Mammary epithelial cell (primary cell): ENCODE measurements at regions of chr1 and their contacts with region 1.

Region 1: DNA sequence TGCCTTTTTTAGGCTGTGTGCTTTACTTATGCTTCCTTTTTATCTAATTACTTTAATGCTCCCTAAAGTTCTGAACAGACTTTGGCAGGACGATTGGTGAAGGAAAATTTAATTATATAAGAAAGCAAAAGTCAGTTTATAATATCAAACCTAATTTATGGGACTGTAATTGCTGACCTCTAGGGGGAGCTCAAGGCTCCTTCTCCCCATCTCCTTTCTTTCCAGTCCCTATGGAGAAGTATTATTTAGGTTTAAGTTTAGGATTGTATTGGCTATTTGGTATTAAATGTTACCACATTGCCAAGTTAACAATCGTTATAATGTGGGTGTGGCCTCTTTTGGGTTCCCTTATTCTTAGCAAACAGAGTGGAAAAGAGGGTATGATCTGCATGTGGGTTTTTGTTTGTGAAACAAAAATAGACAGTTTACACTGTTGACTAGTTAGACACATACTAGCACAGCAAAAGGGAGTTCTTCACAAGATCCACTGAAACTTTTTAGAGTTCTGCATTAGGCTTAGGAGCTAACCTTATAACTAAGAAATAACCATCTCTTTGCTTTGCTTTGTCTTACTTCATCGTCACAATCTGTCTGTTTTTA is 48.2 kb upstream of the TNFSF4 start:
- DNase-seq: peak; percentile 21
- H3K4me3 ChIP-seq: no peak overlapping the region
- H3K27ac ChIP-seq: no peak overlapping the region
- H3K4me1 ChIP-seq: peaks cover 4% of the 10 kb centered on the region
- H3K27me3 ChIP-seq: no peaks in the 10 kb centered on the region
- CTCF ChIP-seq: peak; percentile 82 to 85

Region 2: DNA sequence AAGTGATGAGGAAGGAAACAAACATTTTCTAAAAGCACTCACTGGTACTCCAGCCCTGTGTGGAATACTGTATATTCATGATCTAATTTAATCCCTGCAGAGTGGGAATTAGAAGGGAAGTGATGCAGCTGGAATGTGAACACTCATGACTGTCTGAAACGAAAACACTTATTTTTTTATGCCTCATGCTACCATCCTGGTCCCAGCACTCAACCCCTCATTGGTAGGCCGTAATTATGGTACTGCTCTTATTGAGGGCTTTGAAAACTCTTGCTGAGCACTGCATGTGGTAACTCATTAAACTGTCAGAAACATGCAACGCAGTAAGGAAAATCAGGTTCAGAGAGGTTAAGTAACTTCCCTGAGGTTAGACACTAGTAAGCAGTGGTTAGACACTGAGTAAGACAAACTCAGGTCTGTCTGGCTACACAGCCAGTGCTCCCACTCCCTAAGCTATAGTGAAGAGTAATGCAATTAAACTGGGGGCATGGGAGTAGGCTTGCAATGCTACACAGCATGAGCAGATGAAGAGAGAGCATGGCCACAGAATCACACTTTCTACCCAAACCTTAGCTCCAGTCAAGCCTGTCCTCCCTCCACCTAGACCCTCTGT is 30.9 kb before region 1 on chr1:
- CTCF ChIA-PET with region 1: no interaction called
- dilution Hi-C with region 1: no loop called
- in situ Hi-C with region 1: no loop called
- intact Hi-C with region 1: no loop called
- DNase-seq: no peak
- H3K4me3 ChIP-seq: no peak overlapping the region
- H3K27ac ChIP-seq: no peak overlapping the region
- H3K4me1 ChIP-seq: peaks cover 9% of the 10 kb centered on the region
- H3K27me3 ChIP-seq: no peaks in the 10 kb centered on the region
- CTCF ChIP-seq: no peak

Region 3: GRCh38 chr1:173269490-173270230 is 14.3 kb after region 1 on chr1:
- CTCF ChIA-PET with region 1: no interaction called
- dilution Hi-C with region 1: no loop called
- in situ Hi-C with region 1: no loop called
- intact Hi-C with region 1: no loop called
- DNase-seq: peak; percentile 87
- H3K4me3 ChIP-seq: no peak overlapping the region
- H3K27ac ChIP-seq: peak overlapping the region; percentile 77
- H3K4me1 ChIP-seq: peaks cover 42% of the 10 kb centered on the region
- H3K27me3 ChIP-seq: no peaks in the 10 kb centered on the region
- CTCF ChIP-seq: no peak

Region 4: DNA sequence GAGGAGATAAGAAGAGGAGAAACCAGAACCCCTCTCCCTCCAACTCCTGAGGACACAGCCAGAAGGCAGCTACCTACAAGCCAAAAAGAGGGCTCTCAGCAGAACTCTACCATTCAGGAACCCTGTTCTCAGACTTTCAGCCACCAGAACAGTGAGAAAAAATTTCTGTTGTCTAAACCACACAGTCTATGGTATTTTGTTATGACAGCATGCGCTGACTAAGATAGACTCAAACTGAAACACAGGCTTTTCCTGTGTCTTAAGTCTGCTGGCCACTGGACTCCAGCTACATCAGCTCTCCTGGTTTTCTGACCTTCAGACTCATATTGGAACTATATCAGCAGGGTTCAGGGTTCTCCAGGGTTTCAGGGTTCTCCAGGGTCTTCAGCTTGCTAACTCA is 78.3 kb after region 1 on chr1:
- CTCF ChIA-PET with region 1: no interaction called
- dilution Hi-C with region 1: no loop called
- in situ Hi-C with region 1: no loop called
- intact Hi-C with region 1: no loop called
- DNase-seq: no peak
- H3K4me3 ChIP-seq: no peak overlapping the region
- H3K27ac ChIP-seq: no peak overlapping the region
- H3K4me1 ChIP-seq: peaks cover 8% of the 10 kb centered on the region
- H3K27me3 ChIP-seq: no peaks in the 10 kb centered on the region
- CTCF ChIP-seq: no peak

Region 5: GRCh38 chr1:173409613-173410012 is 154.3 kb after region 1 on chr1:
- CTCF ChIA-PET with region 1: interaction called, 3 read pairs
- dilution Hi-C with region 1: no loop called
- in situ Hi-C with region 1: loop called (anchors 5 to 25 kb)
- intact Hi-C with region 1: loop called (anchors 1 kb)
- DNase-seq: peak; percentile 37
- H3K4me3 ChIP-seq: no peak overlapping the region
- H3K27ac ChIP-seq: no peak overlapping the region
- H3K4me1 ChIP-seq: peaks cover 20% of the 10 kb centered on the region
- H3K27me3 ChIP-seq: no peaks in the 10 kb centered on the region
- CTCF ChIP-seq: no peak

Region 6: DNA sequence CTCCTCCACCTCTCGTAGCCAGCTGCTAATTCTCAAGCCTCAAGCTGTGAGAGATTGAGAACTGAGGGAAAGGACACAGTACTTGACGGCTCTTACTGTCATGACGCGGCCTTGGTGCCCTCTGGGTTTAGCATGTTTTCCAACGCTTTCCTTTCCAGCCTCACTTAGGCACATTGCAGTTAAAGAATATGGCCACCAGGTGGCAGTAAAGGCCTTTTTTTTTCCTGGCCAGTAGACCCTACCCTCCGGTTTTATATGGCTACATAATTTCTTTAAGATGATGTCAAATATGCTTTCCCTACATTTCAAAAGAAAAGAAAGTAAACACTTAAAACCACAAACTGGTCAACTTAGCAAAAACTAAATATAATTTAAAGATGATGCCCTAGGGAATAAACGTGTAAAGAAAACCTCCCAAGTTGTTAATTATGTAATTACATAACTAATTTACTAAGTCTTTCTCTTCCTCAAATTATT is 165.1 kb after region 1 on chr1:
- CTCF ChIA-PET with region 1: no interaction called
- dilution Hi-C with region 1: no loop called
- in situ Hi-C with region 1: loop called in 1 of 2 experiments (anchors 25 kb)
- intact Hi-C with region 1: loop called (anchors 1 kb)
- DNase-seq: peak; percentile 68
- H3K4me3 ChIP-seq: no peak overlapping the region
- H3K27ac ChIP-seq: no peak overlapping the region
- H3K4me1 ChIP-seq: peaks cover 19% of the 10 kb centered on the region
- H3K27me3 ChIP-seq: no peaks in the 10 kb centered on the region
- CTCF ChIP-seq: peak; percentile 77 to 85

Region 7: DNA sequence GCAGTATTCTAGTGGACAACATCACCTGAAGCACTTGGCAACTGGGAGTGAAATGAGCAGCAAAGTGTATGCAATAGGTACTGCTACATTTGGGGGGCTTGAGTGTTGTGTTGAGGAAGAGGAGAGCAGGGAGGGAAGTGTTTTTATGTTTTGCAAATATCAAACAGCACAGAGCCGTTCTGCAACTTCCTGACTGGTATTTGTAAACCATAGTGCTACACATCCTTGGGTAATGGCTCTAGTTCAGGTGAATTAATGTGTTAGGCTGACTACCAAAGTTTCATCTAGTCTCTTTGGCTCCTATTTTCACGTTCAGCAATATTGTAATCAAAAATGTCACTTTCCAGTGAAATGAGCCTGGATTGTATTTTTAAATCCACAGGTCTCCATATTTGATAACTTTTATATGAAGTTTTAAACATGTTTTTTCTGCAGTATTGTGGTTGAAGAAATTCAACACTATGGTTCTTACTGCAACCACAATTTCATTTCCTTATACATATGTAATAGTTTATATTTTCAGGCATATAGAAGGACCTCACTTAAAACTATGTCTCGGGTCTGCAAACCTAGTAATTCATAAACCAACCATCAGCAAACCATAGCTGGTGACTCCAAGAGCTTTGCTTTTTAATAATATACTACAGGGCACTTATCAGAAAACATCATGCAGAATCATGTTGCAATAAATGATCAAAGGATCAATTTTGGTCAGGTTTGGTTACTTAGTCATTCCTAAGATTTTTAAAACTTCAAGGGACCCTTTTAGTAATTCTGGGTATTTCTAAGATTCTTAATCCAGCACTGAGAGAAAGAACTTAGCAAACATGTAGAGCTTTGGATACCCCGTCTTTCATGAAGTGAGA is 631.7 kb after region 1 on chr1:
- CTCF ChIA-PET with region 1: no interaction called
- dilution Hi-C with region 1: no loop called
- in situ Hi-C with region 1: no loop called
- intact Hi-C with region 1: no loop called
- DNase-seq: no peak
- H3K4me3 ChIP-seq: no peak overlapping the region
- H3K27ac ChIP-seq: no peak overlapping the region
- H3K4me1 ChIP-seq: no peaks in the 10 kb centered on the region
- H3K27me3 ChIP-seq: no peaks in the 10 kb centered on the region
- CTCF ChIP-seq: no peak